Endothelial cell of umbilical vein (primary cell): ENCODE measurements at regions of chr7 and their contacts with region 1.

Region 1: DNA sequence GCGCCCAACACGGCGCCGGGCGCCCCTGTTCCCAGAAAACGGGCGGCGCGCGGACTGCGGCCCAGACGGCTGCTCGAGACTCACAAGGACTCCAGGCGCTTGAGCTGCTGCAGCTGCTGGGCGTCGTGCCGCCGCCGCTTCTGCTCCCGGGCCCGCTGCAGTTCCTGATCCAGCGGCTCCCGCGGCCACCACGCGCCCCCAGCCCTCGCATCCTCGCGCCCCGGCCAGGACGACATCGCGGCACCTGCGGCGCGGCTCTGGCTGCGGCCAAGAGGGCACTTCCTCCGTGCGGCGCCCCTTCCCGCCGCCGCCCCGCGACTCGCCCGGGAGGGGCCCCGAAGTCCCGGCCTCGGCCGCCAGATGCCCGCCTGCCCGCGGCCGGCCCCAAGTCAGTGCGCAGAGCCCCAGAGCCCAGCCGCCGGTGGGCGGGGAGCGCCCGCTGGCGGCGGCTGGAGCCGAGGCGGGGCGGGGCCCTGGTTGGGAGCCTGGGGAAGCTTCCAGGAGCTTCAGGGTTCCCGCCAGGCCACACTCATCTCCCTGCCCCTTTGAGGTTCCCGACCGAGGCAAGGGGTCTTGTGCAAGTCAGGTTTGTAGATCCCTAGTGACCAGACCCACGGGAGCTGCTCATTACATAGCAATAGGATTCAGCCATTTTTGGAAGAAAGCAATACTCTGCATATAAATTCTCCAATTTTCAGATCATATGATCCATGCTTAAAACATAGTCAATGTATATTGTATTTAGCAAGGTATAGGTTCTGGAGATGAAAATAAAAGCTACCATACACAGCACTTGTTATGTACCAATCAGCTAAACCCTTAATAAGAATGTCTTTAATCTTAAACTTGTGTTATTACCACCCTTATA is 14.2 kb upstream of the FKBP9 start:
- DNase-seq: peak; percentile 78
- H3K4me3 ChIP-seq: peak overlapping the region; percentile 84 to 93 (median 92)
- H3K27ac ChIP-seq: peak overlapping the region; percentile 73
- H3K4me1 ChIP-seq: peaks cover 10% of the 10 kb centered on the region
- H3K27me3 ChIP-seq: no peaks in the 10 kb centered on the region
- CTCF ChIP-seq: peak; percentile 59 to 66
- POLR2A ChIP-seq: peak; percentile 7

Region 2: DNA sequence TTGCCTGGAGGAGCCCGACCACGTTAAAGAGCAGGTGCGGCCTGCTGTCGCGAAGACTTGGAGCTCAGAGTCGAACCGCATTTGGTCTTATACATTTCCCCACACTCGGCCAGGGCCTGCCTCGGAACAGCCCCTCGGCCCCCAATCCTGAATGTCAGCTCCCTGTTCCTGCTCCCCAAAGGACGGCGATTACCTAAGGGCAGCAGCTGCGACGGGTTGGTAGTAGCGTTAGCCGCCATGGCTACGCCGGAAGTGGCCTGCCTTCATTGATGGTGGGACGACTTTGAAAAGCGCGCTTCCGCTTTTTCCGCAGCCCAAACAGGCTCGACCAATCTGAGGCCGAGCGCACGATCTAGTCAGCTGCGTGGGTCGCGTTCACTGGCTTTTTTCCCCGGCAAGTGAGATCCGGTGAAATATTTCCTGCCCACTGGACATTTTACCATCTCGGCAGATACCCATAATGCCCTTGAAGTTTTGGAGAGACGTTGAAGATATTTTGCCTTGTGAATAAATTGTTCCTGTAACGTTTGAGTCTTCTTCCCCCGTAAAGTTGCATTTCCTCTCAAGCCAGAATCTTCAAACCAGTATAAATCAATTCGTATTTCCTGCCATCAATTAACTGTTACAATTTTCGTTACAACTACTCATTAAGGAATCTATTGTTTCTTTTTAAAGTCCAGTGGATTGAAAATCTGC is 452.7 kb before region 1 on chr7 and contains the start of gene LSM5:
- CTCF ChIA-PET with region 1: no interaction called
- POLR2A ChIA-PET with region 1: no interaction called
- dilution Hi-C with region 1: no loop called
- intact Hi-C with region 1: loop called (anchors 5 kb)
- DNase-seq: peak; percentile 94
- H3K4me3 ChIP-seq: peak within 1 kb of the TSS; percentile 38 to 86 (median 73)
- H3K27ac ChIP-seq: peak within 1 kb of the TSS; percentile 34
- H3K4me1 ChIP-seq: peaks cover 11% of the 10 kb centered on the region
- H3K27me3 ChIP-seq: no peaks in the 10 kb centered on the region
- CTCF ChIP-seq: no peak
- POLR2A ChIP-seq: peak; percentile 84
- total RNA-seq, gene LSM5: 63.3 and 68.1 TPM in 2 replicates

Region 3: DNA sequence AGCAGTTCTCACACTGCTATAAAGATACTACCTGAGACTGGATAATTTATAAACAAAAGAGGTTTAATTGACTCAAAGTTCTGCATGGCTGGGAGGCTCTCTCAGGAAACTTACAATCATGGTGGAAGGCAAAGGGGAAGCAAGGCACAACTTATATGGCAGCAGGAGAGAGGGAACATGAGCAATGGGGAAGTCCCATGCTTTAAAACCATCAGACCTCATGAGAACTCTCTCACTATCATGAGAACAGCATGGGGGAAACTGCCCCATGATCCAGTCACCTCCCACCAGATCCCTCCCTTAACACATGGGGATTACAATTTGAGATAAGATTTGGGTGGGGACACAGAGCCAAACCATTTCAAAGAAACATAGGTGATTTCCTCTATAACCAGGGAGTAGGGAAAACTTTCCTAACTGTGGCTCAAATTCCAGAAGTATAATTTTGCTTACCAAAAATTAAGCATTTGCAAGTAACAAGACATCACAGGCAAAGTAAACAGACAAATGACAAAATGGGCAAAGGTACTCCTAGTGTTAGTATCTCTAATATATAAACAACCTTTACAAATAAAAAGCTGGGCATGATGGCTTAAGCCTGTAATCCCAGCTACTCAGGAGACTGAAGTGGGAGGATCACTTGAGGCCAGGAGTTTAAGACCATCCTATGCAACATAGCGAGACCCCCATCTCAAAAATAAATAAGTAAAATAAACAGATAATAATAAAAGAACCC is 139.4 kb before region 1 on chr7:
- CTCF ChIA-PET with region 1: interaction called, 6 read pairs
- POLR2A ChIA-PET with region 1: no interaction called
- dilution Hi-C with region 1: no loop called
- intact Hi-C with region 1: loop called (anchors 1 kb)
- DNase-seq: no peak
- H3K4me3 ChIP-seq: no peak overlapping the region
- H3K27ac ChIP-seq: no peak overlapping the region
- H3K4me1 ChIP-seq: no peaks in the 10 kb centered on the region
- H3K27me3 ChIP-seq: no peaks in the 10 kb centered on the region
- CTCF ChIP-seq: no peak
- POLR2A ChIP-seq: no peak

Region 4: GRCh38 chr7:32891800-32892520 is 51.1 kb before region 1 on chr7:
- CTCF ChIA-PET with region 1: interaction called, 4 read pairs
- POLR2A ChIA-PET with region 1: no interaction called
- dilution Hi-C with region 1: no loop called
- intact Hi-C with region 1: loop called (anchors 1 kb)
- DNase-seq: peak; percentile 96
- H3K4me3 ChIP-seq: peak overlapping the region in 2 of 3 experiments; percentile 68 to 90
- H3K27ac ChIP-seq: peak overlapping the region; percentile 99
- H3K4me1 ChIP-seq: peaks cover 46% of the 10 kb centered on the region
- H3K27me3 ChIP-seq: no peaks in the 10 kb centered on the region
- CTCF ChIP-seq: no peak
- POLR2A ChIP-seq: no peak

Region 5: GRCh38 chr7:32957326-32958045 is 14.5 kb after region 1 on chr7 and contains the start of gene FKBP9:
- CTCF ChIA-PET with region 1: interaction called, 16 read pairs
- POLR2A ChIA-PET with region 1: interaction called, 4 read pairs
- dilution Hi-C with region 1: no loop called
- intact Hi-C with region 1: loop called (anchors 1 kb)
- DNase-seq: peak; percentile 82
- H3K4me3 ChIP-seq: peak within 1 kb of the TSS; percentile 50 to 89 (median 73)
- H3K27ac ChIP-seq: peak within 1 kb of the TSS; percentile 78
- H3K4me1 ChIP-seq: peaks cover 10% of the 10 kb centered on the region
- H3K27me3 ChIP-seq: no peaks in the 10 kb centered on the region
- CTCF ChIP-seq: no peak
- POLR2A ChIP-seq: peak; percentile 92
- total RNA-seq, gene FKBP9: 112 and 124 TPM in 2 replicates

Region 6: GRCh38 chr7:33050535-33051318 is 107.7 kb after region 1 on chr7:
- CTCF ChIA-PET with region 1: interaction called, 10 read pairs
- POLR2A ChIA-PET with region 1: no interaction called
- dilution Hi-C with region 1: no loop called
- intact Hi-C with region 1: loop called (anchors 5 kb)
- DNase-seq: peak; percentile 84
- H3K4me3 ChIP-seq: no peak overlapping the region
- H3K27ac ChIP-seq: no peak overlapping the region
- H3K4me1 ChIP-seq: peaks cover 11% of the 10 kb centered on the region
- H3K27me3 ChIP-seq: no peaks in the 10 kb centered on the region
- CTCF ChIP-seq: peak; percentile 41 to 52
- POLR2A ChIP-seq: no peak